Mammary epithelial cell (primary cell): ENCODE measurements at regions of chr9 and their contacts with region 1.

Region 1: DNA sequence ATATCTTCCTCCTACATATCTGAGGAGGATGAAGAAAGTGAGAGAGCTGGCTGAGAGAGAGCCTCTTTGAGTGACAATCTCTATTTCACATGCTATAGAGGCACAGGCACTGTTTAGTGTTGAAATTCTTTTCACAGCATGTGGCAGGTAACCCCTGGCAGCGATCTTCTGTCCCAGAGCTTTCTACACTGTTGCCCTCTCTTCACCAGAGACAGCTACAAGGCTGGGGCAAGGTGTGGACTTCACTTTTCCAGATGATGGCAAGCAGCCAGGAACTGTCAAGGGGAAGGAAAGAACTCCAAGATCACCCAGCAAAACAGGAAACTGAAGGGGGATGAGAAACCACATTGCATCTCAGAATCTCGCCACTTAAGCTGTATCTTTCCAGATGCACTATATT is 205.2 kb downstream of the CAAP1 start:
- DNase-seq: no peak
- H3K4me3 ChIP-seq: no peak overlapping the region
- H3K27ac ChIP-seq: no peak overlapping the region
- H3K4me1 ChIP-seq: no peaks in the 10 kb centered on the region
- H3K27me3 ChIP-seq: no peaks in the 10 kb centered on the region
- CTCF ChIP-seq: no peak

Region 2: DNA sequence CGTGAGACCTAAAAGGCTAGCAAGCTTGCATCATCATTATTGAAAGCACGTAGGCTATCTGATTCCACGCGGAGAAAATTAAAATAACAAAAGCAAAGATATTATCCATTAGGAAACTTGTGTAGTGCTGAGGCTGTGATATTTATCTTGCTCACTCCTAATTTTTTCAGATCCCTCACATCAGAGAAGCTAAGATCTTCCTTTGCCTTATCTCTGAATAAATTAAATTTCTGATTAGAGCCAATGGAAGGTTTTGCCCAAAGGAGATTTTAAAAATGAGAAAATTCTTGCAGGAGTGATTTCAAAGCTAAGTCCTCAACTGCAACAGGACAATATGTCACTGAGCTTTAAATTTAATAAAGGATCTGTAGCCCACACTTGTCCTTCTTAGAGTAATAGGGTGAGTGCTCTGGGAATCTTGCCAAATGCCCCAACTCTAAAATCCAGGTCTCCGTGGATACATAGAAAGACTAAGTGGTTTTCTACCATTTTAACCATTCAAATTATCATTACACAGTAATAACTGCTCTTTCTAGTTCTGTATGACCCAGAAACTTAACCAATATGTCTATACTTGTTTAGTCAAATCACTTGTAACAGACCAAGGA is 89.8 kb before region 1 on chr9:
- CTCF ChIA-PET with region 1: no interaction called
- dilution Hi-C with region 1: no loop called
- in situ Hi-C with region 1: loop called in 1 of 2 experiments (anchors 25 kb)
- intact Hi-C with region 1: no loop called
- DNase-seq: no peak
- H3K4me3 ChIP-seq: no peak overlapping the region
- H3K27ac ChIP-seq: no peak overlapping the region
- H3K4me1 ChIP-seq: no peaks in the 10 kb centered on the region
- H3K27me3 ChIP-seq: no peaks in the 10 kb centered on the region
- CTCF ChIP-seq: no peak